SK-N-SH (cell line): ENCODE measurements at regions of chr22 and their contacts with region 1.

Region 1: DNA sequence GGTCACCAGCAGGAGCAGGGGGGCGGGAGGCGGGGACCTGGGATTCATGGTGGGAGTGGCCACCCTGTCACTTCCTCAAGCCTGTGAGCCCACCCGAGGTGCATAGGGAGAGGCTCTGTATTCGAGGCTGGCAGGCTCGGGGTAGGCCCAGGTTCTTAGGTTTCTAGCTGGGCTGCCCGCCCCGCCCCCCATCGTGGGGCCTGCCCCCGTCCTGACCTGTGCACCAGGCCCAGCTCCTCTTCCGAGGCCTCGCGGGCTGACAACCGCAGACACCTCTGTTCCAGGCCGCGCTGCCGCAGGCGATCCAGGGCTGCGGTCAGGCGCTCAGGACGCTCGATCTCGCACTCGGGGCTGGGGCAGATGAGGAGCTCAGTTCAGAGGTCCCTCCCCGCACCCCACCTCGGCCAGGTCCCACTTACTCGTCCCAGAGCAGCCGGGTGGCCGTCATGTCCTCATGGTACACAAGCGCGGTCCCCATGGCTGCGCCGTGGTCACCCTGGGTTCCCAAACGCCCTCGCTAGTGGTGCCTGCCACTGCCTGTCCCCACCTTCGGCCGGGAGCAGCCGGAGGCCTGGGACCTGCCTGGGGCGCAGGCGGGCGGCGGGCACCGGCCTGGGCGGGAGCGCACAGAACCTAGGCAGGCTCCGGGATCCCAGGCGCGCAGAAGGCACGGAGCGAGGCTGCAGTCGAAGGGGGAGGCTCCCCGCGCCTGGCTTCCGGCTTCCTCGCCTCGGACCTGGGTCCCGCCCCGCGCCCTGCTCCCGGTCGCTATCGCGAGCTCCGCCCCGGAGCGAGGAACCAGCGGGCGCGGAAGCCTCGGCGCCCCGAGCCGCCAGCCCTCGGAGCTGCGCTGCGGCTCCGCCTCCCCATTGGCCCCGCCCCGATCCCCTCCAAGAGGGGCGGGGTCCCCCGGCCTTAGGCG is at the start of gene HDAC10:
- DNase-seq: peak; percentile 94
- H3K4me3 ChIP-seq: peak within 1 kb of the TSS; percentile 80 to 89
- H3K27ac ChIP-seq: peak within 1 kb of the TSS; percentile 62 to 86
- H3K4me1 ChIP-seq: peaks cover 6 to 54% of the 10 kb centered on the region in 2 experiments; a peak in 2 of 4 replicates
- H3K27me3 ChIP-seq: no peaks in the 10 kb centered on the region
- CTCF ChIP-seq: no peak
- EP300 ChIP-seq: no peak
- RAD21 ChIP-seq: no peak
- polyA plus RNA-seq, gene HDAC10: 51.9 and 55.1 TPM in 2 replicates

Region 2: GRCh38 chr22:50139843-50140415 is 110.9 kb before region 1 on chr22:
- CTCF ChIA-PET with region 1: no interaction called
- POLR2A ChIA-PET with region 1: no interaction called
- DNase-seq: no peak
- H3K4me3 ChIP-seq: no peak overlapping the region
- H3K27ac ChIP-seq: no peak overlapping the region
- H3K4me1 ChIP-seq: no peaks in the 10 kb centered on the region
- H3K27me3 ChIP-seq: no peaks in the 10 kb centered on the region
- CTCF ChIP-seq: no peak
- EP300 ChIP-seq: no peak
- RAD21 ChIP-seq: no peak

Region 3: DNA sequence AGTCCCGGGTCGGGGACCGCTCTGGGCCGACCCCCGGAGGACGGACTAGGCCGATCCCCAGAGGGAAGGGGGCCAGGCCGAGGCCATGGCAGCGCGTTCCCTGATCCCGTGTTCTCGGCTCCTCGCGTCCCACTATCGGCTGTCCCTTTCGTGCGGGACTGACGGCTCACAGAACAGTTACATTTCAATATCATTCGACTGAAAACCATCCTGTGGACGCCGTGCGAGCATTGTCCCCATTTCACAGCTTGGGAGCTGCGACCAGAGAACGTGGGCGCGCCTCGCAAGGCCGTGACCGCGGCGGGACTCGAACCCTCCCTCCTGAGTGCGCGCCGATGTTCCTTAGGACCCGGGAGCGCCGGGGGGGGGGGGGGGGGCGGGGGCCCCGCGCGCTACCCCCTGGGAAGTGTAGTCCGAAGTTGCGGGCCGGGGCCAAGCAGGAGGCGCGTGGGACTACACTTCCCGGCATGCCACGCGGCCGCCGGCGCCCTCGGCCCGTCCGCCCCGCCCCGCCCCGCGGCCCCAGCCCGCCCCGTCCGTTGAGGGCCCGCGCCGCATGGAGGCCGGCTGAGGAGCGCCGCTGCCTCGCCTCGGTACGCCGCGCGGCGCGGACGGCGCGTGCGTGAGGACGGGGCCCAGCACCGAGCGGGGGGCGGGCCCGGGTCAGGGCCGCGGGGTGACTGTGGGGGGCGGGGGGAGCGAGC is 65.3 kb before region 1 on chr22 and contains the start of gene TRABD:
- CTCF ChIA-PET with region 1: no interaction called
- POLR2A ChIA-PET with region 1: no interaction called
- DNase-seq: peak; percentile 99
- H3K4me3 ChIP-seq: peak within 1 kb of the TSS; percentile 68 to 73
- H3K27ac ChIP-seq: peak within 1 kb of the TSS in 1 of 2 experiments; percentile 69; a peak in 1 of 4 replicates
- H3K4me1 ChIP-seq: peaks cover 4 to 45% of the 10 kb centered on the region in 2 experiments; a peak in 2 of 4 replicates
- H3K27me3 ChIP-seq: no peaks in the 10 kb centered on the region
- CTCF ChIP-seq: no peak
- EP300 ChIP-seq: no peak
- RAD21 ChIP-seq: no peak
- polyA plus RNA-seq, gene TRABD: 36.7 and 50.6 TPM in 2 replicates

Region 4: DNA sequence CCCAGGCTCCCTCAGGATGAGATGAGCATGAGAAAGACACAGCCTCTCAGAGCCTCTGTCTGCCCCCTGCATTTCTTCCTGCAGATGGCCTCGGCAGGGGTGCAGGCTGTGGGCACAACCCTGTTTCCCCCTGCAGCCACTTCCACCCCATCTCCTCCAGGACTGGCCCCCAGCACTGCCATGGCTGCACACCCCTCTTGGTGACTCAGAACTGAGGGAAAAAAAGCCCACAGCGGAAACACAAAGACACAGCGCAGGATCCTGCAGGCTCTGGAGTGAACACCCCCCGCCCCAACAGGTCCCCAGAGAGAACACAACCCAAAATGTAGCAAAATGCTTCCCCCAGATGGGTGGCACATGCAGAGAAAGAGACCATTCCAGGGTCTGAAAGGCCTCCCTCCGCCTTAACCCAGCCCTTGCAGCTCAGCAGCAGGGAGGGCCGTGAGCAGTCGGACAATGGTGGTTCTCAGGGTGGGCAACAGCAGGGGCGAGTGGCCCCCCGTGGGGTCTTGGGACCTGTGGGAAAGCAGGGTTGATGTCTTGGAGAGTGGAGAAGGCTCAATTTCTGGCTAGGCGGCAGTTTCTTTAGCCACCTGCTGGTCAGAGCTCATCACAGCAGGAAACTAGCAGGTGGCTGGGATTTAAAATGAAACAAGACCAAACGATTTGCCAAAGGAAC is 13.9 kb before region 1 on chr22:
- CTCF ChIA-PET with region 1: interaction called, 22 read pairs
- POLR2A ChIA-PET with region 1: no interaction called
- DNase-seq: no peak
- H3K4me3 ChIP-seq: no peak overlapping the region
- H3K27ac ChIP-seq: no peak overlapping the region
- H3K4me1 ChIP-seq: peaks cover 0 to 9% of the 10 kb centered on the region in 2 experiments; a peak in 1 of 4 replicates
- H3K27me3 ChIP-seq: no peaks in the 10 kb centered on the region
- CTCF ChIP-seq: peak; percentile 55
- EP300 ChIP-seq: no peak
- RAD21 ChIP-seq: peak; percentile 45

Region 5: DNA sequence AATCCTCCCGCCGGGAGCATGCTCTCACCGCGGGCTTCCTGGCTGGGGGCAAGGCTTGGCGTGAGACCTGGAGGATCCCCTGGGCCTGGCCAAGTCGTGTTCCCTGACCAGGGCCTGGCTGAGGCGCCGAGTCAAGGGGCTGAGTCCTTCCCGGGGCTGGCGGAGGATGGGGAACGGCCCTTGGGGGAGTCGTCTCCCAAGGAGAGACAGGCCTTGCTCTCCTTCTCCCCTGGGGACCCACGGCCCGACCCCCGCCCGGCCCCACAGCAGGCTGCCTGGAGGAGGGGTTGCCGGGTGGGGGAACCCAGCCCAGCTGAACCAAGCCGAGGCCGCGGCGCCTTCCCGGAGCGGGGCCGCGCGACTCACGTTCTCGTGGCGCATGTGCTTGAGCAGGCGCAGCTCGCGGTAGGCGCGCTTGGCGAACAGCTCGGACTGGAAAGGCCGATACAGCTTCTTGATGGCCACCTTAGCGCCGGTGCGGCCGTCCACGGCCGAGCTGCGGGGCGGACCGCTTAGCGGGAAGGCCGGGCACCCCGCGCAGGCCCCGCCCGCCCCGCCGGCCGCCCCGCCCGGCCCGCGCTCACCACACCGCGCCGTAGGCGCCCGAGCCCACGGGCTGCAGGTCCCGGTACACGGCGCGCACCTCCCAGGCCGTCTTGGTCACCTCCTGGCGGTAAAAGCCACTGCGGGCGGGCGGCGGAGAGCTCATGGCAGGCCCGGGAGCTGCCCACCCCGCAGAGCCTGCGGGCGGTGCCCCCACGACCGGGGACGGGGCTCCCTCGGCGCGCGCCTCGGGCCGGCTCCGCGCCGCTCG is 10.2 kb after region 1 on chr22:
- CTCF ChIA-PET with region 1: interaction called, 72 read pairs
- POLR2A ChIA-PET with region 1: interaction called, 10 read pairs
- DNase-seq: peak; percentile 84
- H3K4me3 ChIP-seq: peak overlapping the region; percentile 67 to 72
- H3K27ac ChIP-seq: peak overlapping the region; percentile 26 to 81
- H3K4me1 ChIP-seq: peaks cover 14 to 25% of the 10 kb centered on the region in 2 experiments; a peak in 2 of 4 replicates
- H3K27me3 ChIP-seq: no peaks in the 10 kb centered on the region
- CTCF ChIP-seq: no peak
- EP300 ChIP-seq: no peak
- RAD21 ChIP-seq: no peak

Region 6: DNA sequence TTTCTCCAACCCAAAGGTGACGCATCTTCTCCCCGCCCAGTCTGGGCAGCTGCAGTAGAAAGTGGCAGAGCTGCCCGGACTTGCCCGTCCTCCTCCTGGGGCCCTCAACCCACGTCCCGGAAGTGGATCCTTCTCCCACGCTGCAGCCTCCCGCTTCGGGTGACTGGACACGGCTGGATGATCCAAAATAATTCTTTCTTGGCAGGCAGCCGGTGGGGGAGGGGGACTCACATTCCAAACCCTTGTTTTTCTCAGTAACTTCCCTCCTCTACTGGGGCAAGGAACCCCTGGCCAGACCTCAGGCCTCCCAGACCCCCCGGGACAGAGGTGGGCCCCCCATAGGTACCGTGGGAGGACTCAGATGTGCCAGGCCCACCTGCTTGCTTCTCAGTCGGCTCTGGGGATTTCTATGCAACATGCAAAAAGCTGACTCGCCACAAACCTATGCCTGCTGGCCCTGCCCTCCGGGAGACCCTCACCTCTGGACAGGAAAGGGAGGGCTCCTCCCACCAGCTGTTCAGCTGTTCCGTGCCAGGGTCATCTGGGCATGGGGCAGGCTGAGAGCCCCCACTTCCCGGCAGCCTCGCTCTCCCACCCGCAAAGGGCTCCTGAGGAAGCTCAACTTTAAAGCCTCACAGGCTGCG is 55.2 kb after region 1 on chr22:
- CTCF ChIA-PET with region 1: interaction called, 11 read pairs
- POLR2A ChIA-PET with region 1: no interaction called
- DNase-seq: peak; percentile 77
- H3K4me3 ChIP-seq: peak overlapping the region; percentile 95 to 98
- H3K27ac ChIP-seq: peak overlapping the region; percentile 95 to 97
- H3K4me1 ChIP-seq: peaks cover 46 to 63% of the 10 kb centered on the region in 2 experiments; a peak in 3 of 4 replicates
- H3K27me3 ChIP-seq: no peaks in the 10 kb centered on the region
- CTCF ChIP-seq: no peak
- EP300 ChIP-seq: peak in 1 of 2 experiments; percentile 65; a peak in 1 of 4 replicates
- RAD21 ChIP-seq: no peak